Naive thymus-derived CD8-positive, alpha-beta T cell (primary cell): ENCODE measurements at regions of chr2 and their contacts with region 1.

Region 1: GRCh38 chr2:191114403-191114886 is 36.3 kb downstream of the STAT4 start:
- DNase-seq: peak in 5 of 10 donors; percentile 34 to 53 (median 47)
- ATAC-seq: peak; percentile 61 to 75
- H3K4me3 Mint-ChIP-seq: peak overlapping the region; percentile 12 to 76 (median 72)
- H3K27ac Mint-ChIP-seq: peak overlapping the region; percentile 78 to 95 (median 90)
- H3K4me1 Mint-ChIP-seq: peaks cover 33 to 80% (median 76%) of the 10 kb centered on the region in 4 donors
- H3K27me3 Mint-ChIP-seq: no peaks in the 10 kb centered on the region

Region 2: GRCh38 chr2:191013932-191014652 is 100.4 kb before region 1 on chr2 and contains the start of gene STAT1:
- POLR2A ChIA-PET with region 1: no interaction called
- DNase-seq: peak; percentile 93 to 98 (median 97)
- ATAC-seq: peak; percentile 87
- H3K4me3 Mint-ChIP-seq: no peak within 1 kb of the TSS
- H3K27ac Mint-ChIP-seq: no peak within 1 kb of the TSS
- H3K4me1 Mint-ChIP-seq: peaks cover 15 to 47% (median 28%) of the 10 kb centered on the region in 4 donors
- H3K27me3 Mint-ChIP-seq: no peaks in the 10 kb centered on the region
- polyA plus RNA-seq, gene STAT1: 154 to 231 (median 217) TPM

Region 3: DNA sequence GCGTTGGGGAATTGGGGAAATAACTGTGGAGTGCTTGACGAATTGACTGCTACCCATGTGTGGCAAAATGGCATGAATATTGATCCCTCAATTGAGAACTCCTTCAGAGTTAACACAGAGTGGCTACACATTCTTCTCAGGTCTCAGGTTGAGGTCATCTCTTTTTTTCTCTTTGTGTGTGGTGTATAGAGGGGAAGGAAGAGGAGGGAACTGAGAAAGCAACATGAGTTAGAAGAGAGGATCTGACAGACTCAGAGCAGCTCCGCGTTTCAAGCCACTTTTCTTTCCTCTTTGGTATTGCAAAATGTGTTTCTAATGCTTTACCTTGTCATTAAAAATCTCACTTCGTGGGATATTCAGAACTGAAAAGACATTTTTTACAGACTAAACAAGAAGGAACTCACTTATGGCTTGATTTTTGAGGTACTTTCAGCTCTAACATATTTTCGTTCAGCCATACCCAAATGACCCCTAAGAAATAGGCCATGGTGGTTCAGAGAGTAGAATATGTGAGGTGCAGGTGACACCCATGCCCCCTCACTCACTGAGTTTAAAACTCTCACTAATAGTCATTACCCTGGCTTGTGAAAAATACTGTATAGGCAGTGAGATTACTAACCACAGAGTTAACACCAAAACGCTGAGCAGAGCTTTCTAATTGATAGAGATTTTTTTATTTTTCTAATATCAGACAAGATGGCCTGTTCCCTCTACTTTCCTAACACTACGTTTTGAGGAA is 13.9 kb after region 1 on chr2:
- POLR2A ChIA-PET with region 1: interaction called, 10 read pairs
- DNase-seq: peak in 2 of 10 donors; percentile 13 to 31
- ATAC-seq: peak; percentile 74 to 81
- H3K4me3 Mint-ChIP-seq: peak overlapping the region; percentile 6 to 71 (median 55)
- H3K27ac Mint-ChIP-seq: peak overlapping the region; percentile 69 to 91 (median 86)
- H3K4me1 Mint-ChIP-seq: peaks cover 30 to 72% (median 69%) of the 10 kb centered on the region in 4 donors
- H3K27me3 Mint-ChIP-seq: no peaks in the 10 kb centered on the region